Ovary (tissue), 10 donors: ENCODE measurements at regions of chr3 and their contacts with region 1.

Region 1: DNA sequence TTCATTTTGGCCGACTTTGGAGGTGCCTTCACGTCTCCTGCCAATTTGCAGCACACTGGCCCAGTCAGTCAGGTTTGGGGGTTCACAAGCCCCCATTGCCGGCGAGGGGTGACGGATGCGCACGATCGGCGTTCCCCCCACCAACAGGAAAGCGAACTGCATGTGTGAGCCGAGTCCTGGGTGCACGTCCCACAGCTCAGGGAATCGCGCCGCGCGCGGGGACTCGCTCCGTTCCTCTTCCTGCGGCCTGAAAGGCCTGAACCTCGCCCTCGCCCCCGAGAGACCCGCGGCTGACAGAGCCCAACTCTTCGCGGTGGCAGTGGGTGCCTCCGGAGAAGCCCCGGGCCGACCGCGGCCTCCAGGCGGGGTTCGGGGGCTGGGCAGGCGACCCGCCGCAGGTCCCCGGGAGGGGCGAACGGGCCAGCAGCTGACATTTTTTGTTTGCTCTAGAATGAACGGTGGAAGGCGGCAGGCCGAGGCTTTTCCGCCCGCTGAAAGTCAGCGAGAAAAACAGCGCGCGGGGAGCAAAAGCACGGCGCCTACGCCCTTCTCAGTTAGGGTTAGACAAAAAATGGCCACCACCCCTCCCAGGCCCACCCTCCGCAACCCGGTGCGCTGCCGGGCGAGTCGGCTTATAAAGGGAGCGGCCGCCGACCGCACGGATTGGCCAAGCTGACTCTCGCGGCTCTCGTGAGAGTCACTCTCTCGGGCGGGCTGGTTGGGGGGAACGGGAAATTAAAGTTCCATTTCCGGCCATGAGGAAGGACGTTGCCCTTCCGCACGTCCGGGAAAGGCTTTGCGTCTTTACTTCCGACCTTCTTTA is at the start of gene TERC:
- DNase-seq: peak; percentile 95 to 96 (median 95)
- H3K4me3 ChIP-seq: peak within 1 kb of the TSS; percentile 69
- H3K27ac ChIP-seq: peak within 1 kb of the TSS; percentile 90 to 96
- H3K4me1 ChIP-seq: no peaks in the 10 kb centered on the region
- H3K27me3 ChIP-seq: no peaks in the 10 kb centered on the region
- CTCF ChIP-seq: peak in 1 of 3 donors; percentile 12
- EP300 ChIP-seq: peak; percentile 72
- POLR2A ChIP-seq: peak; percentile 97
- total RNA-seq, gene TERC: 2.4 to 467 (median 5.2) TPM

Region 2: GRCh38 chr3:169966428-169966950 is 201.8 kb after region 1 on chr3 and contains the start of gene SEC62:
- intact Hi-C with region 1: loop called in 1 of 4 experiments (anchors 10 kb)
- DNase-seq: peak; percentile 94 to 98 (median 97)
- H3K4me3 ChIP-seq: peak within 1 kb of the TSS; percentile 99
- H3K27ac ChIP-seq: peak within 1 kb of the TSS; percentile 81 to 94
- H3K4me1 ChIP-seq: peaks cover 5% of the 10 kb centered on the region
- H3K27me3 ChIP-seq: no peaks in the 10 kb centered on the region
- CTCF ChIP-seq: peak in 2 of 3 donors; percentile 49 to 59
- EP300 ChIP-seq: no peak
- POLR2A ChIP-seq: peak; percentile 82
- total RNA-seq, gene SEC62: 34.0 to 178 (median 131) TPM